GM10248 (cell line): ENCODE measurements at regions of chr6 and their contacts with region 1.

Region 1: DNA sequence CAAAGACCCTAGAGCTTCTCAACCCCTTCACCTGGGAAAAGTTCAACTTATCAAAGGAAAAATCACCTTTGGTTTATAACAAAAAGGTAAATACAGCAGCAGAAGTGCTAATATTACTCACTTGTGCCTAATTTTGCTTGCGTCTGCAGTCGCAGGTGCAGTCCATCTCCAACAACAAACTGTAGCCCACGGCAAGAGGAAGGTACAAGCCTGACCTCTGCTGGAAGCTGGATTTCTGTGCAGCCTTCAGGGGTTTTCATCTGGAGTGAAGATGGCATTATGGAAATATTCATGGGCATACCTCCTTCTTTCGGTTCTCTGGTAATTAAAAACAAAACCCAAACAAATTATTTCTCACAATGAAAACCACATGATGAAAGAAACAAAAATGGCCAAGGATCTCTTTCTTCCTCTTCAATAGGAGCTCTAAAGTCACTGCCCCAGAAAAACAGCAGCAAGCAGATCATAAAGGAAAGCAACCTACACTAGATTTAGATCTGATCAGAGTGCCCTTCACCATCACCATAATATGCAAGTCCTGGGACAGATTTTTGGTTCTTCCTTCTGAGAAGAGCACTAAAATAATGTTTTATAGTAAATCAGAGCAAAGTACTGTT is 7.8 kb downstream of the UBE3D start:
- DNase-seq: peak; percentile 28
- CTCF ChIP-seq: peak; percentile 63

Region 2: GRCh38 chr6:82247634-82248232 is 810.1 kb before region 1 on chr6 and contains the start of gene IBTK:
- CTCF ChIA-PET with region 1: interaction called, 14 read pairs
- POLR2A ChIA-PET with region 1: no interaction called
- DNase-seq: peak; percentile 94
- CTCF ChIP-seq: no peak

Region 3: DNA sequence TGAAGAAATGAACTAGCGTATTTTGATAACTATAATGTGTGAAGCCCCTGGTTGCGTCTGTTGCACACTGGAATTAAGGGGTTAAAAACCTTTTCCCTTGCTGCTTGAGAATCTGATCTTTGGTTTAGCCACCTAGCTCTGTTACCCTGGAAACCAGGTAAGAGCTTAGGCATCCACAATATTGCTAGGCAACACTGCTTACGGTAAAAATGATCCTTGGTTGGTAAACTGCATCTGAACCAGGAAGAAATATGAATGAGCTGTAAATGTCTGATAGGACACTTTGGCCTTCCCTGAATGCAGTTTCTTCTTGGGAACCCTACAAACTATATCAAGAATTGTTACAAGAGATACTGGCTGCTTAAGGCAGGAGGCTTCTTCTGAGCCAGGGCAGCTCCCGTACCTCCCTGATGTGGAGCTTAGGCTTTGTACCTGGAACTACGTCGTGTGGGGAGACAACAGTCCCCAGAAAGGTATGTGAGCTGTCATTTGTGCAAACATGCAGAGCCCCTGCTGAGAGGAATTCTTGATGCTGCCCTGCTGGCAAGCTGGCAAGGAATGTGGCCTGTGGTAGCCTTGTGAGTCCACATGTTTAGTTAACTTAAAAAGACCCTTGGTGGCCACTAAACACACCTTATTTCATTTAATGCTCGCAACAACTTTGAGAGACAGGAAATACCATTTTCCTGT is 10.6 kb before region 1 on chr6:
- CTCF ChIA-PET with region 1: interaction called, 11 read pairs
- POLR2A ChIA-PET with region 1: no interaction called
- DNase-seq: no peak
- CTCF ChIP-seq: no peak